BJ (cell line): ENCODE measurements at regions of chr4 and their contacts with region 1.

Region 1: DNA sequence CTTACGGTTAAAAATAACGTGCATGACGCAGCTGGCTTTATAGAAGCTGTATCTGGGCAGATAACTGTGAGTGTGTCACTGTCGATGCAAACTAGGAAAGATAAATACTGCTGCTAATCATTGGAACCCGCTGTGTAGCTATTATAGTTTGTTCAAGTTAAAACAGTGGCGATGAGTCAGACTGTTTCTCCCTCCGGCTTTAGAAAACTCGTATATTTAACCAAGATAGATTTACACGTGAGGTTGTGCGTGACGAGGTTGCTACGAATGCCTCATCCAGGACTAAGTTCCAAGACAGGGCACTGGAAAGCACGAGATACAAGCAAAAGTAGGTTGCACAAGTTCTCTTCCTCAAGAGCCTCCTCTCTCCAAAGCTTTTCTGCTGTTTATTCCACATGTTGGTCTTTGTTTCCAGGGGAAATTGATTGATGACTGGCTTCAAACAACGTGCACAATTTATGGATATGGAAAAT is 270.7 kb downstream of the FBXW7 start:
- DNase-seq: peak; percentile 70
- H3K4me3 ChIP-seq: no peak overlapping the region
- H3K27me3 ChIP-seq: no peaks in the 10 kb centered on the region
- CTCF ChIP-seq: no peak

Region 2: GRCh38 chr4:150976478-150977118 is 1288.6 kb before region 1 on chr4:
- CTCF ChIA-PET with region 1: no interaction called
- POLR2A ChIA-PET with region 1: no interaction called
- DNase-seq: no peak
- H3K4me3 ChIP-seq: no peak overlapping the region
- H3K27me3 ChIP-seq: no peaks in the 10 kb centered on the region
- CTCF ChIP-seq: no peak

Region 3: GRCh38 chr4:152243896-152244595 is 21.1 kb before region 1 on chr4:
- CTCF ChIA-PET with region 1: no interaction called
- POLR2A ChIA-PET with region 1: no interaction called
- DNase-seq: no peak
- H3K4me3 ChIP-seq: no peak overlapping the region
- H3K27me3 ChIP-seq: peaks cover 2% of the 10 kb centered on the region; the same call in 1 of the 2 replicates
- CTCF ChIP-seq: no peak

Region 4: DNA sequence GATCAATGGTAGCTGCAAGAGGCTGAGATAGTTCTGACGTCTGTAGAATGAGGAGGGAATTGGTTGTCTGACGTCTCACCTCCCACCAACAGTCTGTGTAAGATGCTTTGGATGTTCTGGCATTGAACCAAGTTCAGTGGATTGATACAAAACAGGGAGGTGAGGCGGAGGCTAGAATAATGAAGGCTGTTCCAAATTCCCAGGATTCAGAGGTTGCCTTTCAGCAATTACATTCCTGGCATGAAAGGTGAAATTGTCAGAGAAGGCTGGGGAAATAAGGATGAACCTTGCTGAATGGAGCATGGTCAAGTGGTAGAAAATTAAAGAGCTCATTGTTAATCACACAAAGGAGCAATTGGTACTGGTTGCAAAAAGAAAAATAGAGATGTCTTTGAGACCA is 29.1 kb after region 1 on chr4:
- CTCF ChIA-PET with region 1: interaction called, 3 read pairs
- POLR2A ChIA-PET with region 1: interaction called, 10 read pairs
- DNase-seq: no peak
- H3K4me3 ChIP-seq: no peak overlapping the region
- H3K27me3 ChIP-seq: peaks cover 2% of the 10 kb centered on the region; the same call in 1 of the 2 replicates
- CTCF ChIP-seq: no peak